Gastrocnemius medialis (tissue), 4 donors: ENCODE measurements at regions of chr1 and their contacts with region 1.

Region 1: DNA sequence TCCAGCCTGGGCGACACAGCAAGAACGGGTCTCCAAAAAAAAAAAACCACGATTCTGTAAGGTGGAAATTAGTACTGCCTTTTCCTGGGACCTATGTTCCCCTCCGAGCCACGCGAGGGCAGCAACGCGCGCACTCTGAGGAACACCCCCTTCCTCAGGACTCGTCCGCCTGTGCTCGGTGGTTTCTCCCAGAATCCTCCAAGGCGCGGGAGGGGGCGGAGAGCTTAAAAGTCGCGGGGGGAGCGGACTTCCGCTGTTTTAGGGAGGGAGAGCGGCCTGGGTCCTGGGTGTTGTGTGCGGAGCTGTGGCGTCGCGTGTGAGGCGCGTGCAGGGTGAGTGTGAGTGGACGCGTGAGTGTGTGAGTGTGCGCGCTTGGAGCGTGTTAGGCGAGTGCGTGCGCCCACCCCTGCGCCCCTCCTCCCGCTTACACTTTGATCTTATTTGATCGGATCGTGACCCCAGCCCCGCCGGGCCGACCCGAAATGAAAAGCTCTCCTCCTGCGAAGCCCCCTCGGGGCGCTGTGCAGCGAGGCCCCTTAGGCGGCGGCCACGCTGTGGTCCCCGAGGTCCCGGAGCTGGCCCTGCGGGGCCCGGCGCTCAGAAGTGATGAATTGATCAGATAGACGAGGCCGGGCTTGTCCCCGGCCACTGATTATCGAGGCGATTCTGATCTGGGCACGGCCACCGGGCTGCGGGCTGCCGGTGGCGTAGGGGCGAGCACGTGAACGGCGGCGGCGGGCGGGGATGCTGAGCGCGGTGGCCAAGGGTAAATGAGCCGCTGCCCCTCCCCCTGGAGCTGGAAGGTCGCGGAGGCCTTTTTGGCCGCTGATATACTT is 9.6 kb downstream of the TMEM167B start:
- DNase-seq: peak; percentile 96 to 97
- ATAC-seq: peak; percentile 97 to 98
- H3K4me3 ChIP-seq: peak overlapping the region; percentile 76 to 99 (median 93)
- H3K27ac ChIP-seq: peak overlapping the region; percentile 96 to 100 (median 98)
- H3K4me1 ChIP-seq: peaks cover 16 to 23% of the 10 kb centered on the region in 2 donors
- H3K27me3 ChIP-seq: no peaks in the 10 kb centered on the region
- CTCF ChIP-seq: peak; percentile 80 to 92 (median 85)
- POLR2A ChIP-seq: peak; percentile 94 to 95

Region 2: GRCh38 chr1:108691942-108692723 is 408.0 kb before region 1 on chr1 and contains the start of gene PRPF38B:
- in situ Hi-C with region 1: no loop called
- intact Hi-C with region 1: loop called (anchors 5 kb)
- DNase-seq: peak; percentile 93
- ATAC-seq: peak; percentile 94 to 95
- H3K4me3 ChIP-seq: peak within 1 kb of the TSS; percentile 83 to 97 (median 91)
- H3K27ac ChIP-seq: peak within 1 kb of the TSS; percentile 95 to 99 (median 96)
- H3K4me1 ChIP-seq: peaks cover 32 to 36% of the 10 kb centered on the region in 2 donors
- H3K27me3 ChIP-seq: no peaks in the 10 kb centered on the region
- CTCF ChIP-seq: no peak
- POLR2A ChIP-seq: peak; percentile 91
- total RNA-seq, gene PRPF38B: 13.8 to 17.1 (median 15.7) TPM

Region 3: GRCh38 chr1:108963052-108963686 is 137.0 kb before region 1 on chr1 and contains the start of gene CLCC1:
- in situ Hi-C with region 1: loop called in 1 of 4 experiments (anchors 10 kb)
- intact Hi-C with region 1: no loop called
- DNase-seq: peak; percentile 92
- ATAC-seq: peak; percentile 98
- H3K4me3 ChIP-seq: peak within 1 kb of the TSS; percentile 65 to 85 (median 69)
- H3K27ac ChIP-seq: peak within 1 kb of the TSS; percentile 88 to 96 (median 91)
- H3K4me1 ChIP-seq: peaks cover 10 to 13% of the 10 kb centered on the region in 2 donors
- H3K27me3 ChIP-seq: no peaks in the 10 kb centered on the region
- CTCF ChIP-seq: no peak
- POLR2A ChIP-seq: peak; percentile 86 to 92
- total RNA-seq, gene CLCC1: 24.1 to 32.4 (median 28.5) TPM

Region 4: GRCh38 chr1:109075531-109076490 is 24.3 kb before region 1 on chr1 and contains the start of gene TAF13:
- in situ Hi-C with region 1: no loop called
- intact Hi-C with region 1: loop called (anchors 1 kb)
- DNase-seq: peak; percentile 85 to 92
- ATAC-seq: peak; percentile 98
- H3K4me3 ChIP-seq: peak within 1 kb of the TSS; percentile 77 to 79 (median 78)
- H3K27ac ChIP-seq: peak within 1 kb of the TSS; percentile 87 to 97 (median 96)
- H3K4me1 ChIP-seq: peaks cover 10 to 14% of the 10 kb centered on the region in 2 donors
- H3K27me3 ChIP-seq: no peaks in the 10 kb centered on the region
- CTCF ChIP-seq: peak; percentile 40 to 65 (median 56)
- POLR2A ChIP-seq: peak; percentile 88 to 89
- total RNA-seq, gene TAF13: 28.8 to 83.3 (median 65.5) TPM

Region 5: DNA sequence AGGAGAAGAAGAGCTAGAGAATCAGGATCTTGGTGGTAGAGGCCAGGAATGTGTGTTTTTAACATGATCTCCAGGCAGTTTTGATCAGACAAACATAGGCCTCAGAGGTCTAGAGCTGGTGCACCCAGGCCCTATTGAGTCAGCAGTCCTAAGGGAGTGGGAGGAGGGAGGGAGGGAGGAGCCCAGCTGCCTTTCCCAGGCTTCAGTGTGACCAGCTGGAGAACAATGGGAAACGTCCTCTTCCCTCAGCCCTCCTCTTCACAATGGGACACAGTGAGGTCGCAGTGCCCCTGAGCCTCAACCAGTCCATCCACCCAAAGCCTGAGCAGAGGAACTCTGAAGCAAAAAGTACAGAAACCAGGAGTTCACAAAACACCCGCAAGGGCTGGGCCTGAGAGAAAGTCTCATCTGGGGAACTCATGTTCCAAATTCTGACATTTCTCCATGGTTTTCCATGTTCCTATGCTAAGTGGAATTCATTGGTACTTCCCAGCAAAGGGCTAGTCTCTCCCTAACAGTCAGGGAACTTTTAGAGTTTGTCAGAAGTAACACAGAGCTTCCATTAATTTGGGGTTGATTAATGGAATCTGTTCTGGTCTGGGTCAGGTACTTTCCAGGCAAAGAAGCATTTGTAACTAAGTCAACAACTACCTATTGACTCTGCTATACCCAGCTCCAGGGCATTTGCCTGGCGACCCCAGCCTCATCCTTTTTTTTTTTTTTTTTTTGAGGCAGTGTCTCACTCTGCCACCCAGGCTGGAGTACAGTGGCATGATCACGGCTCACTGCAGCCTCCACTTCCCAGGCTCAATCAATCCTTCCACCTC is 51.2 kb after region 1 on chr1:
- in situ Hi-C with region 1: no loop called
- intact Hi-C with region 1: loop called (anchors 5 kb)
- DNase-seq: peak in 1 of 2 donors; percentile 24
- ATAC-seq: no peak
- H3K4me3 ChIP-seq: no peak overlapping the region
- H3K27ac ChIP-seq: peak overlapping the region; percentile 87 to 93 (median 90)
- H3K4me1 ChIP-seq: peaks cover 20 to 24% of the 10 kb centered on the region in 2 donors
- H3K27me3 ChIP-seq: no peaks in the 10 kb centered on the region
- CTCF ChIP-seq: no peak
- POLR2A ChIP-seq: no peak

Region 6: DNA sequence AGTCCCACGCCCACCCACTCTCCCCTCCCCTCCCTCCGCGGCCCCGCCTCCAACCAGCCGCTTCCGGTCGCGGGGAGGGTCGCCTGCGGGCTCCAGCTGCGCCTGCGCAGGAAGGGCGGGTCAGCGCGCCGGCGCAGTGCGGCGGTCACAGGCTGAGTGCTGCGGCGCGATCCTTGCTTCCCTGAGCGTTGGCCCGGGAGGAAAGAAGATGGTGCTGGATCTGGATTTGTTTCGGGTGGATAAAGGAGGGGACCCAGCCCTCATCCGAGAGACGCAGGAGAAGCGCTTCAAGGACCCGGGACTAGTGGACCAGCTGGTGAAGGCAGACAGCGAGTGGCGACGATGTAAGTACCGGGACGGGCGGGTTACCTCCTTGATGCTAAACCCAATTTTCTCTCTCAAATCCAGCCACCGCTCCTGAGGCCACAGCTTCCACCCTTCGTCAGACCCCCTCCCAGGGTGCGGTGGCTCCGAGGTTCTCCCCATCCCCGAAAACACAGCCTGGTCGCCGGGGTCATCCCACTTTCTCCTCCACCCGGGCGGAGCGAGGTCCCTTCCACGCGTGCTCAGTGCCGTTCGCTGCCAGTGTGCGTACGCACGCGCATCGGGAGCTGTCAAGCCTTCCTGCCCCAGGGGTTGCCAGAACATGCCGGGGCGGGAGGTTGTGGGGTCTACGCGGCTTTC is 113.8 kb after region 1 on chr1 and contains the start of gene SARS1:
- in situ Hi-C with region 1: loop called in 1 of 4 experiments (anchors 10 kb)
- intact Hi-C with region 1: loop called (anchors 5 kb)
- DNase-seq: peak; percentile 79 to 83
- ATAC-seq: peak; percentile 91 to 92
- H3K4me3 ChIP-seq: peak within 1 kb of the TSS; percentile 80 to 98 (median 87)
- H3K27ac ChIP-seq: peak within 1 kb of the TSS; percentile 89 to 97 (median 94)
- H3K4me1 ChIP-seq: peaks cover 18 to 25% of the 10 kb centered on the region in 2 donors
- H3K27me3 ChIP-seq: no peaks in the 10 kb centered on the region
- CTCF ChIP-seq: no peak
- POLR2A ChIP-seq: peak; percentile 85 to 94
- total RNA-seq, gene SARS1: 97.6 to 116 (median 98.7) TPM